ENCODE measurements at regions of chr17 and their contacts with region 1.

Region 1: DNA sequence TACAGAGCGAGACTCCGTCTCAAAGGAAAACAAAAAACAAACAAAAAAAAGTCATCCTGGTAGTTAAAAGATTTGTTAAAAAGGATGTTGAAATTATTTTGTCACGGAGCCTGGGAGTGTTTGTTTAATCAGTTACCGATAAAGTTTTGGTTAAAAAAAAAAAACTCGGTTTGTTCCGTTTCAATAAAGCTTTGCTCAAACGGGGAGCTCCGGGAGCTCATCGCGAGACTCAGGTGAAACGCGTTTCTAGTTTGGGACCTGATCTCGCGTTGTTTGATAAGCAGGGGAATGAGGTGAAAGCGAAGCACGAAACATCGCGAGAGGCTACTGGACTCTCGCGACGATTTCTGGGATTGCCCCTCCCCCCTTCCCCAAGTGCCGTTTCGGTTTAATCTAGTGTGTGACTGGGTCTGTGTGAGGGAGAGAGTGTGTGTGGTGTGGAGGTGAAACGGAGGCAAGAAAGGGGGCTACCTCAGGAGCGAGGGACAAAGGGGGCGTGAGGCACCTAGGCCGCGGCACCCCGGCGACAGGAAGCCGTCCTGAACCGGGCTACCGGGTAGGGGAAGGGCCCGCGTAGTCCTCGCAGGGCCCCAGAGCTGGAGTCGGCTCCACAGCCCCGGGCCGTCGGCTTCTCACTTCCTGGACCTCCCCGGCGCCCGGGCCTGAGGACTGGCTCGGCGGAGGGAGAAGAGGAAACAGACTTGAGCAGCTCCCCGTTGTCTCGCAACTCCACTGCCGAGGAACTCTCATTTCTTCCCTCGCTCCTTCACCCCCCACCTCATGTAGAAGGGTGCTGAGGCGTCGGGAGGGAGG is at the start of gene CDK12:
- DNase-seq: peak; percentile 88 to 98 (median 94)
- H3K4me3 ChIP-seq: peak within 1 kb of the TSS; percentile 99
- H3K4me3 Mint-ChIP-seq: peak within 1 kb of the TSS; percentile 89 to 99 (median 96)
- H3K27ac ChIP-seq: peak within 1 kb of the TSS; percentile 89
- H3K27ac Mint-ChIP-seq: peak within 1 kb of the TSS; percentile 93 to 100 (median 97)
- H3K4me1 ChIP-seq: peaks cover 23% of the 10 kb centered on the region
- H3K4me1 Mint-ChIP-seq: peaks cover 37 to 49% (median 47%) of the 10 kb centered on the region in 3 donors
- H3K27me3 ChIP-seq: no peaks in the 10 kb centered on the region
- H3K27me3 Mint-ChIP-seq: peaks cover 0 to 6% of the 10 kb centered on the region in 2 donors
- total RNA-seq, gene CDK12: 86.9 to 91.8 TPM

Region 2: DNA sequence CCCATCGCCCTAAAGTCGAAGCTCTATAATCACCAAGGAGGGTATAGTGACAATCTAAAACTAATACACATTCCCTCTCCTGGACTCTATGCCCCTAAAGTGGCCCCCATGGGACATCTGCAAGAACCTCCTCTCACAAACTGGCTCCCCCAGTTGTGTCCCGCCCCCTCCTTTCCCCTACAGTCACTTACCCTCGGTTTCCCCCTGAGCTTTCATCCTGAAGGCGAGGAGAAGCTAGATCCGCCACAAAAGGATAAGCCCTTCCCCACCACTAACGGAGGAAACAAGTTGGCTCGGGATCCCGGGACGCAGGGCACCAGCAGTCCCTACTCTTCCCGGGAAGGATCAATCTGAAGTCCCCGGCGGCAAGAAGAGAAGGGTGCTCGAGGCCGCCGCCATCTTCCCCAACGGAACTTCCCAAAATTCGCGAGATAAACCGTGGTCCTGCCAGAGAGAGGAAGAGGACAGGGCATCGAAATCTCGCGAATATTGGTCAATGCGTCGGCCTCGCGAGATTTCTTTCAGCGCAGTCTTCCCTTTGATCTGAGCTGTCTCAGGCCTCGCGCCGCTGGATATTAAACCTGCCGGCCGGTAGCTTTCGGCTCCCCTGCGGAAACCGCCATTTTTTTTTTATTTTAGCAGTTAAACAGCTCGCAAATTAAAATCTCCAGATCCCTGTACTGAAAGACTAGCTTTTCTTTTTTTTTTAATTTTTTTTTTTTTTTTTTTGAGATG is 10.3 kb before region 1 on chr17 and contains the start of gene MED1:
- CTCF ChIA-PET with region 1: interaction called, 22 read pairs
- POLR2A ChIA-PET with region 1: interaction called, 84 read pairs
- DNase-seq: peak; percentile 85 to 94 (median 92)
- H3K4me3 ChIP-seq: peak within 1 kb of the TSS; percentile 91
- H3K4me3 Mint-ChIP-seq: peak within 1 kb of the TSS; percentile 91 to 99 (median 97)
- H3K27ac ChIP-seq: peak within 1 kb of the TSS; percentile 87
- H3K27ac Mint-ChIP-seq: peak within 1 kb of the TSS; percentile 96 to 99 (median 98)
- H3K4me1 ChIP-seq: peaks cover 17% of the 10 kb centered on the region
- H3K4me1 Mint-ChIP-seq: peaks cover 24 to 33% (median 26%) of the 10 kb centered on the region in 3 donors
- H3K27me3 ChIP-seq: no peaks in the 10 kb centered on the region
- H3K27me3 Mint-ChIP-seq: no peaks in the 10 kb centered on the region
- total RNA-seq, gene MED1: 85.1 to 87.3 TPM

Region 3: GRCh38 chr17:39486242-39486641 is 24.9 kb after region 1 on chr17:
- CTCF ChIA-PET with region 1: interaction called, 3 read pairs
- POLR2A ChIA-PET with region 1: interaction called, 14 read pairs
- DNase-seq: no peak
- H3K4me3 ChIP-seq: no peak overlapping the region
- H3K4me3 Mint-ChIP-seq: no peak overlapping the region
- H3K27ac ChIP-seq: no peak overlapping the region
- H3K27ac Mint-ChIP-seq: peak overlapping the region in 1 of 8 donors; percentile 38
- H3K4me1 ChIP-seq: no peaks in the 10 kb centered on the region
- H3K4me1 Mint-ChIP-seq: peaks cover 10 to 23% (median 14%) of the 10 kb centered on the region in 3 donors
- H3K27me3 ChIP-seq: no peaks in the 10 kb centered on the region
- H3K27me3 Mint-ChIP-seq: no peaks in the 10 kb centered on the region

Measured in CD8-positive, alpha-beta memory T cell (primary cell).